Naive thymus-derived CD4-positive, alpha-beta T cell (primary cell): ENCODE measurements at regions of chr1 and their contacts with region 1.

Region 1: GRCh38 chr1:241640029-241640818 is at the starts of genes CHML and OPN3:
- DNase-seq: peak; percentile 79 to 98 (median 85)
- ATAC-seq: peak; percentile 97
- H3K4me3 ChIP-seq: peak within 1 kb of the TSS; percentile 84
- H3K4me3 Mint-ChIP-seq: peak within 1 kb of the TSS; percentile 79 to 92 (median 90)
- H3K27ac ChIP-seq: peak within 1 kb of the TSS; percentile 82
- H3K27ac Mint-ChIP-seq: peak within 1 kb of the TSS; percentile 83 to 97 (median 91)
- H3K4me1 ChIP-seq: peaks cover 0 to 20% of the 10 kb centered on the region in 2 donors
- H3K4me1 Mint-ChIP-seq: peaks cover 25 to 47% (median 45%) of the 10 kb centered on the region in 7 donors
- H3K27me3 ChIP-seq: no peaks in the 10 kb centered on the region
- H3K27me3 Mint-ChIP-seq: no peaks in the 10 kb centered on the region
- total RNA-seq, gene CHML: 11.4 to 18.3 (median 14.0) TPM
- total RNA-seq, gene OPN3: 3.6 to 11.5 (median 10.4) TPM

Region 2: DNA sequence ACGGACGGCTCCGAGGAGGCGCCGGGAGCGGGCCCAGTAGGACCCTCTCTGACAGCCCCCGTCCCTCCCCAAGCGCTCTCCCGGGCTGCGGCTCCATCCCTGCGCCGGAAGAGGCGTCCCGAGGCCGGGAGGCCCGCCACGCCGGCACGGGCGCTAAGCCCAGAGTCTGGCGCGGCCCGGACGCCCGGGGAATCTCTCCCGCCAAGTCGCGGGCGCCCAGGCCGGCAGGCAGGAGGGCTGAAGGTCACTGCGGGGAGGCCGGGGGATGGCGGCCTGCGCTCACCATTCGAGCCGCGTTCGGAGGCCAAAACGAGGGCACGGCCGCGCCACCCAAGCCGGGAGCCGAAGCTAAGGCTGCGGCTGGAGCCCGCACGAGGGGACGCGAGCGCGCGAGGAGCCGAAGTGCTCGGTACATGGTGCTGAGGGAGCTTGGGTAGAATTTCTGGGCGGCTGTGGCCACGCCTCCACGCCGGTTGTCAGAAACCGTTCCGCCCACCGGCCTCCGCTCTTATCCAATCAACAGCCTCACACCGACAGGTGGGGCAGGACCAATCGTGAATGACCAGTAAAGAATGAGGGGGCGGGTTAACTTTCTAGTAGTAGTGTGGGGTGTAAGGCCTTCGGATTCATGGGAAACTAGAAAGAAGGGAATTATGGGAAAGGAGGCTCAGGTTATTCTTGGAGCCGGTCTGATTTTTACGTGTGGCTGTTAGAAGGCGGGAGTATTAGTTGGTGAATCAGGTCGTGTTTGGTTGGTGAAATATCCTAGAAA is 120.7 kb before region 1 on chr1 and contains the start of gene FH:
- CTCF ChIA-PET with region 1: no interaction called
- POLR2A ChIA-PET with region 1: interaction called, 6 read pairs
- intact Hi-C with region 1: loop called (anchors 1 kb)
- DNase-seq: peak; percentile 83 to 96 (median 94)
- ATAC-seq: peak; percentile 99
- H3K4me3 ChIP-seq: peak within 1 kb of the TSS; percentile 66
- H3K4me3 Mint-ChIP-seq: peak within 1 kb of the TSS in 8 of 10 donors; percentile 85 to 96 (median 92)
- H3K27ac ChIP-seq: peak within 1 kb of the TSS; percentile 82
- H3K27ac Mint-ChIP-seq: peak within 1 kb of the TSS; percentile 56 to 92 (median 82)
- H3K4me1 ChIP-seq: peaks cover 5 to 6% of the 10 kb centered on the region in 2 donors
- H3K4me1 Mint-ChIP-seq: peaks cover 2 to 46% (median 38%) of the 10 kb centered on the region in 7 donors
- H3K27me3 ChIP-seq: no peaks in the 10 kb centered on the region
- H3K27me3 Mint-ChIP-seq: peaks cover 15 to 28% (median 26%) of the 10 kb centered on the region in 5 donors
- total RNA-seq, gene FH: 17.3 to 57.9 (median 21.8) TPM

Region 3: GRCh38 chr1:241551759-241552638 is 88.2 kb before region 1 on chr1:
- CTCF ChIA-PET with region 1: no interaction called
- POLR2A ChIA-PET with region 1: interaction called, 8 read pairs
- intact Hi-C with region 1: loop called in 1 of 2 experiments (anchors 1 kb)
- DNase-seq: peak; percentile 25 to 72 (median 61)
- ATAC-seq: peak; percentile 91
- H3K4me3 ChIP-seq: peak overlapping the region; percentile 49
- H3K4me3 Mint-ChIP-seq: peak overlapping the region; percentile 83 to 93 (median 88)
- H3K27ac ChIP-seq: peak overlapping the region; percentile 55
- H3K27ac Mint-ChIP-seq: peak overlapping the region; percentile 93 to 98 (median 96)
- H3K4me1 ChIP-seq: peaks cover 0 to 14% of the 10 kb centered on the region in 2 donors
- H3K4me1 Mint-ChIP-seq: peaks cover 14 to 36% (median 25%) of the 10 kb centered on the region in 7 donors
- H3K27me3 ChIP-seq: no peaks in the 10 kb centered on the region
- H3K27me3 Mint-ChIP-seq: peaks cover 0 to 5% (median 0%) of the 10 kb centered on the region in 5 donors

Region 4: DNA sequence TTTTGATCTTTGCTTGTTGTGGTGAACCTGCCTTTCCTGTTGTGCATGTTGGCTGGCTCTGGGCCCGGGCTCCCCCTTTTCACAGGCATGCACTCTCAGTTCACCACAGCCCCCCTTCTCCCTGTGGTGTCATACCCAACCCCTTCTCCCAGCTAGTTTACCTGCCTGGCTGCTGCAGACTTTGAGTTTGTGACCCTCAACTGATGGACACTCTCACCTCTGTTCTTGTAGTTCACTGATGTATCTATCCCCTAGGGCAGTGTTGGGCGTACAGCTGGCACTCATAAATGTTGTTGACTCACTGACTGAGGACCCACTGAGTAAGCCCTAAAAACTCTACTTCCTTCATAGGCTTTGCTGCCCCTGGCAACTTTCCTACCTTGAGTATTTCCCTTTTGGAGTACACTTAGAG is 66.7 kb after region 1 on chr1:
- CTCF ChIA-PET with region 1: no interaction called
- POLR2A ChIA-PET with region 1: interaction called, 4 read pairs
- intact Hi-C with region 1: loop called (anchors 2 kb)
- DNase-seq: peak in 7 of 9 donors; percentile 25 to 59 (median 43)
- ATAC-seq: peak; percentile 66
- H3K4me3 ChIP-seq: no peak overlapping the region
- H3K4me3 Mint-ChIP-seq: peak overlapping the region; percentile 15 to 78 (median 46)
- H3K27ac ChIP-seq: no peak overlapping the region
- H3K27ac Mint-ChIP-seq: peak overlapping the region in 6 of 9 donors; percentile 8 to 87 (median 61)
- H3K4me1 ChIP-seq: peaks cover 8 to 18% of the 10 kb centered on the region in 2 donors
- H3K4me1 Mint-ChIP-seq: peaks cover 5 to 20% (median 17%) of the 10 kb centered on the region in 7 donors
- H3K27me3 ChIP-seq: no peaks in the 10 kb centered on the region
- H3K27me3 Mint-ChIP-seq: peaks cover 0 to 9% (median 0%) of the 10 kb centered on the region in 5 donors

Region 5: DNA sequence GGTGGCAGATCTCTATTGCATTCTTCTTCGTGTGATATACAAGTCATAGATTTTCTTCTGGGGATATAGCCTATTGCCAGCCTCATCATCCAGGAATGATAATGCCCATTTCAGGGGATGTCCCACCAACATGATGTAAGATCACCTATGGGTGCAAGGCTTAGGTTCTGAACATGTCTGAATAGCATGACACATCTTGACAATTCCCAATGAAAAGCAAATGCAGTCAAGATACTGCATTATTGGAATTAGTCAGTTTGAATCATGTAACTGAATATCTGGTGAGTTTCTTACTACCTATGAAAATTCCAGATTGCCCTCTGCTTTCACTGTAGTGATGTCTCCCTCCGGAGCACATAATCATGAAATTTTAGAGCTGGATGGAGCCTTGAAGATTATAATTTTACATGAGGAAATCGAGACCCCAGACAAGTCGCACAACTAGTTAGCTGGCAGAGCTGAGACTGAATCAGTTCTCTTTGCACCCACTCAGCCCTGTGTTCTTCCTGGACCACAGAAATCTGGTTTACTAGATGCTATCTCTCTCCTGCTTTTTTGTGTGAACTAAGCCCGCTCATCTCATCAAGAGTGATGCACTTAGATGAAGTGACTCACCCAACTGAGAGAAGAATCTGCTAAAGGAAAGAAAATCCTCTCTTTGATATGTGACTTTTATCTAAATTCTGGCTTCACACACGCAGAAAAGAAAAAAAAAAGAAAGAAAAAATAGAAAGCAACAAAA is 76.9 kb after region 1 on chr1:
- CTCF ChIA-PET with region 1: no interaction called
- POLR2A ChIA-PET with region 1: interaction called, 3 read pairs
- intact Hi-C with region 1: loop called in 1 of 2 experiments (anchors 1 kb)
- DNase-seq: peak in 4 of 9 donors; percentile 15 to 36 (median 16)
- ATAC-seq: peak; percentile 46
- H3K4me3 ChIP-seq: no peak overlapping the region
- H3K4me3 Mint-ChIP-seq: peak overlapping the region in 2 of 10 donors; percentile 7 to 45
- H3K27ac ChIP-seq: no peak overlapping the region
- H3K27ac Mint-ChIP-seq: peak overlapping the region in 1 of 9 donors; percentile 19
- H3K4me1 ChIP-seq: no peaks in the 10 kb centered on the region
- H3K4me1 Mint-ChIP-seq: peaks cover 0 to 20% (median 14%) of the 10 kb centered on the region in 7 donors
- H3K27me3 ChIP-seq: no peaks in the 10 kb centered on the region
- H3K27me3 Mint-ChIP-seq: peaks cover 0 to 18% (median 4%) of the 10 kb centered on the region in 5 donors

Region 6: GRCh38 chr1:241847796-241848685 is 207.8 kb after region 1 on chr1 and contains the start of gene EXO1:
- CTCF ChIA-PET with region 1: no interaction called
- POLR2A ChIA-PET with region 1: no interaction called
- intact Hi-C with region 1: loop called (anchors 1 kb)
- DNase-seq: peak; percentile 84 to 92 (median 89)
- ATAC-seq: peak; percentile 99
- H3K4me3 ChIP-seq: peak within 1 kb of the TSS; percentile 96
- H3K4me3 Mint-ChIP-seq: peak within 1 kb of the TSS; percentile 87 to 99 (median 96)
- H3K27ac ChIP-seq: peak within 1 kb of the TSS; percentile 96
- H3K27ac Mint-ChIP-seq: peak within 1 kb of the TSS; percentile 95 to 99 (median 99)
- H3K4me1 ChIP-seq: peaks cover 6 to 12% of the 10 kb centered on the region in 2 donors
- H3K4me1 Mint-ChIP-seq: peaks cover 7 to 42% (median 17%) of the 10 kb centered on the region in 7 donors
- H3K27me3 ChIP-seq: no peaks in the 10 kb centered on the region
- H3K27me3 Mint-ChIP-seq: peaks cover 0 to 8% (median 0%) of the 10 kb centered on the region in 5 donors
- total RNA-seq, gene EXO1: 0.11 to 29.8 (median 1.0) TPM